ENCODE measurements at regions of chr14 and their contacts with region 1.

Region 1: DNA sequence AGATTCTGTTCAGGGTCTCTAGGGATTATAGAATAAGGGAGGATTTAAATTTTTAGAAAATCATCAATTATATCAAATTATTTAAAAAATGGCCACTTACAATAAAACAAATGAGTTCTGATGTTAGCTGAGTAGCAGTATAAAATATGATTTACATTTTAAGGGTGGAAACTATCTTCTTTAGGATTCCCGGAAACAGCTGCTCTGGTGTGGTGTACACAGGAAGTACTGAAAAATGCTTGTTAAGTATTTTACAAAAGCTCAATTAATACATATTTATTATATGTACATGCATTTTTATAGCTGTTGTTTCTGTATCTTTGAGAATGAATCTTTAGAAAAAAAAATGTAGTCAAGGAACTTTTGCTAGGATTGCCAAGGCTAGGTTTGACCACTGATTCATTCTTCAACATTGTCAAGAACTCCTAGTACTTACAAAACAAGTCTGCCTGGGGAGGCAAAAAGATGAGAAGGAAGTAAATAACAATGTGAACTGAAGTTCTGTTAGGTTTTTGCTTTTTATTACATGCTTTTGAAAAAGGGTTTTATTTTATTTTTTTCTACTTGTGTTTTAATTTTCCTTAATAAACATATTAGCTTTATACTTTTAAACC is 48.0 kb downstream of the ARF6 start:
- DNase-seq: peak; percentile 30
- H3K4me3 Mint-ChIP-seq: no peak overlapping the region
- H3K27ac Mint-ChIP-seq: peak overlapping the region; percentile 63
- H3K4me1 Mint-ChIP-seq: peaks cover 68% of the 10 kb centered on the region
- H3K27me3 Mint-ChIP-seq: no peaks in the 10 kb centered on the region

Region 2: GRCh38 chr14:49898485-49898884 is 42.4 kb before region 1 on chr14:
- CTCF ChIA-PET with region 1: interaction called, 5 read pairs
- POLR2A ChIA-PET with region 1: interaction called, 14 read pairs
- DNase-seq: no peak
- H3K4me3 Mint-ChIP-seq: peak overlapping the region; percentile 73
- H3K27ac Mint-ChIP-seq: peak overlapping the region; percentile 78
- H3K4me1 Mint-ChIP-seq: peaks cover 31% of the 10 kb centered on the region
- H3K27me3 Mint-ChIP-seq: no peaks in the 10 kb centered on the region

Region 3: GRCh38 chr14:49908432-49908781 is 32.5 kb before region 1 on chr14:
- CTCF ChIA-PET with region 1: interaction called, 3 read pairs
- POLR2A ChIA-PET with region 1: interaction called, 10 read pairs
- DNase-seq: no peak
- H3K4me3 Mint-ChIP-seq: peak overlapping the region; percentile 21
- H3K27ac Mint-ChIP-seq: peak overlapping the region; percentile 49
- H3K4me1 Mint-ChIP-seq: peaks cover 45% of the 10 kb centered on the region
- H3K27me3 Mint-ChIP-seq: no peaks in the 10 kb centered on the region